ENCODE measurements at regions of chr5 and their contacts with region 1.

Region 1: GRCh38 chr5:64634997-64635686 is 55.2 kb upstream of the SHISAL2B start:
- DNase-seq: no peak
- ATAC-seq: no peak
- H3K4me3 ChIP-seq: no peak overlapping the region
- H3K27ac ChIP-seq: no peak overlapping the region
- H3K4me1 ChIP-seq: no peaks in the 10 kb centered on the region; the same call in 1 of the 2 replicates
- H3K27me3 ChIP-seq: no peaks in the 10 kb centered on the region; a peak in 1 of 5 replicates
- CTCF ChIP-seq: peak; percentile 68
- EP300 ChIP-seq: no peak
- POLR2A ChIP-seq: no peak
- RAD21 ChIP-seq: no peak

Region 2: GRCh38 chr5:63500242-63500641 is 1134.9 kb before region 1 on chr5:
- CTCF ChIA-PET with region 1: no interaction called
- POLR2A ChIA-PET with region 1: no interaction called
- in situ Hi-C with region 1: no loop called
- intact Hi-C with region 1: no loop called
- DNase-seq: no peak
- ATAC-seq: no peak
- H3K4me3 ChIP-seq: no peak overlapping the region
- H3K27ac ChIP-seq: no peak overlapping the region
- H3K4me1 ChIP-seq: no peaks in the 10 kb centered on the region
- H3K27me3 ChIP-seq: no peaks in the 10 kb centered on the region
- CTCF ChIP-seq: no peak
- EP300 ChIP-seq: no peak
- POLR2A ChIP-seq: no peak
- RAD21 ChIP-seq: no peak

Region 3: GRCh38 chr5:64595031-64595855 is 39.9 kb before region 1 on chr5:
- CTCF ChIA-PET with region 1: no interaction called
- POLR2A ChIA-PET with region 1: no interaction called
- in situ Hi-C with region 1: no loop called
- intact Hi-C with region 1: no loop called
- DNase-seq: no peak
- ATAC-seq: peak; percentile 96
- H3K4me3 ChIP-seq: no peak overlapping the region
- H3K27ac ChIP-seq: no peak overlapping the region
- H3K4me1 ChIP-seq: no peaks in the 10 kb centered on the region
- H3K27me3 ChIP-seq: no peaks in the 10 kb centered on the region
- CTCF ChIP-seq: no peak
- EP300 ChIP-seq: no peak
- POLR2A ChIP-seq: no peak
- RAD21 ChIP-seq: no peak

Region 4: DNA sequence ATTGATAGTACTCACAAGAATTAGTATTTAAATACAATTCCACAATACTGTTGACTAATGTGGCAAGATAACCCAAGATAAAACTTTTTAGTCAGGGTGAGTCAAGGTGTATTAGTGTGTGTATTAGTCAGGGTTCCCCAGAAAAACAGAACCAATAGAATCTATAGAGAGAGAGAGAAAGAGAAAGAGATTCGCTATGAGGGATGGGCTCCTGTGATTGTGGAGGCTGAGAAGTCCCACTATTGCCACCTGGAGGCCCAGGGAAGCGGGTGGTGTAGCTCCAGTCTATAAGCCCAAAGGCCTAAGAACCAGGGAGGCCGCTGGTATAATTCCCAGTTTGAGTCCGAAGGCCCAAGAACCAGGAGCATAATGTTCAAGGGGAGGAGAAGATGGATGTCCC is 45.1 kb after region 1 on chr5:
- CTCF ChIA-PET with region 1: interaction called, 6 read pairs
- POLR2A ChIA-PET with region 1: no interaction called
- in situ Hi-C with region 1: no loop called
- intact Hi-C with region 1: loop called (anchors 1 kb)
- DNase-seq: peak; percentile 6
- ATAC-seq: peak; percentile 94
- H3K4me3 ChIP-seq: no peak overlapping the region
- H3K27ac ChIP-seq: no peak overlapping the region
- H3K4me1 ChIP-seq: no peaks in the 10 kb centered on the region
- H3K27me3 ChIP-seq: no peaks in the 10 kb centered on the region
- CTCF ChIP-seq: peak; percentile 36; the same call in 1 of the 2 replicates
- EP300 ChIP-seq: no peak
- POLR2A ChIP-seq: no peak
- RAD21 ChIP-seq: no peak

Region 5: DNA sequence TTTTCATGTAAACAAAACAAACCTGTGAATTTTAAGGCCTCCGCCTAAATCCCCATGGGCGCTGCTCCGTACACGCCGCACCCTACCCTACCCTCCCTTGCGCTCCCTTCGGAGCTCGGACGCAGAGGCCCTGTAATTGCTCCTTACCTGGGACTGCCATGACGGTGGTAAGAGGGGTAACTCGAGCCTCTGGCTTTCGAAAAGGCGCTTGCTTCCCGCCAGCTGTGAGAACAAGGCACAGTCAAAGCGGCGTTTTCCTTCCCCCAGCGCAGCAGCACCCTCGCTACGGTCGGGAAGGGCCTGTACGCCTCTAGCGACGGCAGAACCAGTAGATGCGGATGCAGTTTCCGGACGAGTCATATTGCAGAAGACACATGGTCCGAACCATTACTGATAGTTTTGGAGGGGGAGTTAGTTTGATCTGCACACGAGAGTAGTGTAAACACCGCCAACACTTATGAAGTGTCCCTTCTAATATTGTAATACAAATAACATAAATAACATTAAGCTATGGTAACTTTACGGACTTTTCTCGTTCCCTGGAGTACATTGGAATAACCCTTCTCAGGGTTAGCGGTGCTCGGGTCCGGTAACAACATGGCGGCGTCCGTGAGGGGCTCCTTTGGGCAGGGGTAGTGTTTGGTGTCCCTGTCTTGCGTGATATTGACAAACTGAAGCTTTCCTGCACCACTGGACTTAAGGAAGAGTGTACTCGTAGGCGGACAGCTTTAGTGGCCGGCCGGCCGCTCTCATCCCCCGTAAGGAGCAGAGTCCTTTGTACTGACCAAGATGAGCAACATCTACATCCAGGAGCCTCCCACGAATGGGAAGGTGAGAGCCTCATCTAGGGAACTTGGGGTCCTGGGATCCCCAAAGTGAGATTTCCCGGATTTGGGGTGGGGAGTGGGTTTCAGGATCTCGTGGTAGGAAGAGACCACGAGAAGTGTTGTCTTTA is 133.5 kb after region 1 on chr5 and contains the starts of genes CWC27 and SREK1IP1:
- CTCF ChIA-PET with region 1: no interaction called
- POLR2A ChIA-PET with region 1: no interaction called
- in situ Hi-C with region 1: no loop called
- intact Hi-C with region 1: loop called (anchors 5 kb)
- DNase-seq: peak; percentile 87
- ATAC-seq: peak; percentile 99
- H3K4me3 ChIP-seq: peak within 1 kb of the TSS; percentile 91 to 99 (median 98)
- H3K27ac ChIP-seq: peak within 1 kb of the TSS; percentile 96
- H3K4me1 ChIP-seq: peaks cover 39% of the 10 kb centered on the region
- H3K27me3 ChIP-seq: no peaks in the 10 kb centered on the region; a peak in 1 of 5 replicates
- CTCF ChIP-seq: 0 out of 2 replicates have a peak, but pooled peaks have one; percentile 15
- EP300 ChIP-seq: no peak
- POLR2A ChIP-seq: peak; percentile 74 to 85
- RAD21 ChIP-seq: no peak
- total RNA-seq, gene CWC27: 25.7 and 38.1 TPM in 2 replicates
- total RNA-seq, gene SREK1IP1: 16.5 and 28.7 TPM in 2 replicates

Region 6: DNA sequence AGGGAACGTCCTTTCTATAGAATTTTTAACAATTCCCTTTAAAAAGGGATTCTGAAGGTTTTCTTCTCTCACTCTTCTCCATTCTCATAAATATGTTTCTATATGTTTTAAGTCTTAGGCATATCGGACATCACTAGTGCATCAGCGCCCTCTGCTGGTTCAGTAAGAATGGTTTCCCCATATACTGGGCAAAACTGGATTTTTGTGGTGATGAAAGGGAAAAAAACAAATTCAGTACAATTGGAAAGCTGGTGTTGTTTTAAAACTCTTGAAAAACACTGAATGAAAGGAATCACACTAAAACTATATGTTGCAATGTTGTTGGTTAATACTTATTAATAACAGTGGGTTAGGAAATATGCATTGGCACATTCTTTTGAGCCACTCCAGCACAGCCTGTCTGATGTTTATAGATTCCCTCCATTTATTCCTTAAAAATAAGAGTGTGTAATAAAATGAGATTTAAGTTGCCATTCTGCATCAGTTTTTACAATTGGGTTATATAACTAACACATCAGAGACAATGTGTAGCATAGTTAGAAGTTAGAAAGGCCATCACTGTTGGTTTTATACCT is 149.4 kb after region 1 on chr5:
- CTCF ChIA-PET with region 1: interaction called, 52 read pairs
- POLR2A ChIA-PET with region 1: no interaction called
- in situ Hi-C with region 1: loop called (anchors 5 kb)
- intact Hi-C with region 1: loop called (anchors 1 kb)
- DNase-seq: peak; percentile 71
- ATAC-seq: peak; percentile 77
- H3K4me3 ChIP-seq: no peak overlapping the region
- H3K27ac ChIP-seq: no peak overlapping the region
- H3K4me1 ChIP-seq: no peaks in the 10 kb centered on the region
- H3K27me3 ChIP-seq: no peaks in the 10 kb centered on the region
- CTCF ChIP-seq: peak; percentile 82
- EP300 ChIP-seq: no peak
- POLR2A ChIP-seq: no peak
- RAD21 ChIP-seq: peak; percentile 17; the same call in 1 of the 2 replicates